ENCODE measurements at regions of chr12 and their contacts with region 1.

Region 1: DNA sequence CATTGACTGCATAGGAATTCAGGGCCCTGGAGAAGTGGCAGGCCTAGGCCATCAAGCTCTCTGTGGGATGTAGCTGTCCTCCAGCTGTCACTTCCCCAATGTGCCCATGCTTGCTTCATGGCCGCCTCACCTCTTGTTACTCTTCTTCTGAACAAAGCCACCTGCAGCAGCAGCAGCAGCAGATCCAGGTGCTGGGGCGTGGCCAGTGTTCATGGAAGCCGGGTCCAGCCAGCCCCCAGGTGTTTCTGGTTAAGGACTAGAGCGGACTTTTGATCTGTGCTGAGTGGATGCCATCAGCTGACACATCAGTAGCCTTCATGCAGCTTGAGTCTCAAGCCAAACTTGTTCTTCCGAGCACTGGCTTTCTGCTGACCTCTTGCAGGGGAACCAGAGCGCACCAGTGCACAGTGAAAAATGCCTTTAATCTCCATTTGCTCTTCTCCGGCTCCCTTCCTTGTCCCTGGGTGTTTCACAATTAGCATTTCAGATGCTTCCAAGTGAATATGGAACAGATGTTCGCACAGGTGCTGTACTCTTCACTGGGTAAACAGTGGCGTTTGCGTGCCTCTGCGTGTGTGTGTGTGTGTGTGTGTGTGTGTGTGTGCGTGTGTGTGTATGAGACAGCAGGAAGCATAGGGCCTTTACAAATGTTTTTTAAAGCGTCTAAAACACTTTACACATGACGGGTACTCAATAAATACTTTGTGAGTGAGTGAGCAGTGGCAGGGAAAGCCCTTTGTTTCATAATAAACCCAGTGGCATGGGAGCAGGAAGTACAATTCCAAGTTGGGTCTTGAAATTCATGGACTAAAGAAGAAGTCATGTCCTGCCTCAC is 20.1 kb downstream of the TPCN1 start:
- DNase-seq: no peak
- H3K4me3 ChIP-seq: no peak overlapping the region
- H3K27ac ChIP-seq: peak overlapping the region; percentile 41
- H3K4me1 ChIP-seq: peaks cover 41% of the 10 kb centered on the region
- H3K27me3 ChIP-seq: no peaks in the 10 kb centered on the region
- CTCF ChIP-seq: no peak

Region 2: GRCh38 chr12:113230315-113231234 is 10.8 kb before region 1 on chr12:
- CTCF ChIA-PET with region 1: no interaction called
- POLR2A ChIA-PET with region 1: no interaction called
- intact Hi-C with region 1: no loop called
- DNase-seq: no peak
- H3K4me3 ChIP-seq: no peak overlapping the region
- H3K27ac ChIP-seq: no peak overlapping the region
- H3K4me1 ChIP-seq: peaks cover 14% of the 10 kb centered on the region
- H3K27me3 ChIP-seq: no peaks in the 10 kb centered on the region
- CTCF ChIP-seq: no peak

Region 3: GRCh38 chr12:113261847-113262470 is 20.6 kb after region 1 on chr12:
- CTCF ChIA-PET with region 1: no interaction called
- POLR2A ChIA-PET with region 1: interaction called, 3 read pairs
- intact Hi-C with region 1: loop called (anchors 1 kb)
- DNase-seq: no peak
- H3K4me3 ChIP-seq: no peak overlapping the region
- H3K27ac ChIP-seq: peak overlapping the region; percentile 9
- H3K4me1 ChIP-seq: peaks cover 14% of the 10 kb centered on the region
- H3K27me3 ChIP-seq: no peaks in the 10 kb centered on the region
- CTCF ChIP-seq: no peak

Region 4: GRCh38 chr12:113284751-113285150 is 43.3 kb after region 1 on chr12:
- CTCF ChIA-PET with region 1: interaction called, 10 read pairs
- POLR2A ChIA-PET with region 1: no interaction called
- intact Hi-C with region 1: no loop called
- DNase-seq: no peak
- H3K4me3 ChIP-seq: no peak overlapping the region
- H3K27ac ChIP-seq: no peak overlapping the region
- H3K4me1 ChIP-seq: no peaks in the 10 kb centered on the region
- H3K27me3 ChIP-seq: no peaks in the 10 kb centered on the region
- CTCF ChIP-seq: no peak

Region 5: GRCh38 chr12:113310489-113310888 is 69.1 kb after region 1 on chr12:
- CTCF ChIA-PET with region 1: interaction called, 11 read pairs
- POLR2A ChIA-PET with region 1: no interaction called
- intact Hi-C with region 1: no loop called
- DNase-seq: peak; percentile 44
- H3K4me3 ChIP-seq: no peak overlapping the region
- H3K27ac ChIP-seq: no peak overlapping the region
- H3K4me1 ChIP-seq: no peaks in the 10 kb centered on the region
- H3K27me3 ChIP-seq: no peaks in the 10 kb centered on the region
- CTCF ChIP-seq: peak; percentile 41; the same call in 1 of the 2 replicates

Region 6: GRCh38 chr12:113392988-113393579 is 151.7 kb after region 1 on chr12:
- CTCF ChIA-PET with region 1: interaction called, 13 read pairs
- POLR2A ChIA-PET with region 1: no interaction called
- intact Hi-C with region 1: no loop called
- DNase-seq: no peak
- H3K4me3 ChIP-seq: no peak overlapping the region
- H3K27ac ChIP-seq: no peak overlapping the region
- H3K4me1 ChIP-seq: no peaks in the 10 kb centered on the region
- H3K27me3 ChIP-seq: no peaks in the 10 kb centered on the region
- CTCF ChIP-seq: no peak